Naive thymus-derived CD4-positive, alpha-beta T cell (primary cell): ENCODE measurements at regions of chr13 and their contacts with region 1.

Region 1: GRCh38 chr13:62483774-62484173 is 1068.1 kb upstream of the PCDH20 start:
- DNase-seq: no peak
- ATAC-seq: no peak
- H3K4me3 ChIP-seq: no peak overlapping the region
- H3K4me3 Mint-ChIP-seq: no peak overlapping the region
- H3K27ac ChIP-seq: no peak overlapping the region
- H3K27ac Mint-ChIP-seq: no peak overlapping the region
- H3K4me1 ChIP-seq: no peaks in the 10 kb centered on the region
- H3K4me1 Mint-ChIP-seq: no peaks in the 10 kb centered on the region
- H3K27me3 ChIP-seq: no peaks in the 10 kb centered on the region
- H3K27me3 Mint-ChIP-seq: no peaks in the 10 kb centered on the region

Region 2: GRCh38 chr13:62432906-62433305 is 50.9 kb before region 1 on chr13:
- CTCF ChIA-PET with region 1: no interaction called
- POLR2A ChIA-PET with region 1: no interaction called
- intact Hi-C with region 1: loop called in 1 of 2 experiments (anchors 5 kb)
- DNase-seq: no peak
- ATAC-seq: no peak
- H3K4me3 ChIP-seq: no peak overlapping the region
- H3K4me3 Mint-ChIP-seq: no peak overlapping the region
- H3K27ac ChIP-seq: no peak overlapping the region
- H3K27ac Mint-ChIP-seq: no peak overlapping the region
- H3K4me1 ChIP-seq: no peaks in the 10 kb centered on the region
- H3K4me1 Mint-ChIP-seq: no peaks in the 10 kb centered on the region
- H3K27me3 ChIP-seq: no peaks in the 10 kb centered on the region
- H3K27me3 Mint-ChIP-seq: no peaks in the 10 kb centered on the region